ENCODE measurements at regions of chr1 and their contacts with region 1.

Region 1: GRCh38 chr1:52920791-52921291 is 699 bp downstream of the ECHDC2 start:
- DNase-seq: peak; percentile 42
- H3K4me3 ChIP-seq: peak overlapping the region; percentile 64 to 85
- H3K27ac ChIP-seq: peak overlapping the region; percentile 89 to 97
- H3K4me1 ChIP-seq: no peaks in the 10 kb centered on the region
- H3K27me3 ChIP-seq: no peaks in the 10 kb centered on the region
- CTCF ChIP-seq: no peak
- POLR2A ChIP-seq: no peak

Region 2: GRCh38 chr1:52404116-52404986 is 516.5 kb before region 1 on chr1 and contains the starts of genes ORC1 and PRPF38A:
- intact Hi-C with region 1: loop called (anchors 5 kb)
- DNase-seq: peak; percentile 99
- H3K4me3 ChIP-seq: peak within 1 kb of the TSS; percentile 57 to 65
- H3K27ac ChIP-seq: peak within 1 kb of the TSS; percentile 83 to 85
- H3K4me1 ChIP-seq: no peaks in the 10 kb centered on the region
- H3K27me3 ChIP-seq: no peaks in the 10 kb centered on the region
- CTCF ChIP-seq: peak in 2 of 4 experiments; percentile 53 to 56
- POLR2A ChIP-seq: peak; percentile 50
- total RNA-seq, gene ORC1: 2.2 to 3.3 TPM
- total RNA-seq, gene PRPF38A: 15.3 to 24.8 TPM

Region 3: DNA sequence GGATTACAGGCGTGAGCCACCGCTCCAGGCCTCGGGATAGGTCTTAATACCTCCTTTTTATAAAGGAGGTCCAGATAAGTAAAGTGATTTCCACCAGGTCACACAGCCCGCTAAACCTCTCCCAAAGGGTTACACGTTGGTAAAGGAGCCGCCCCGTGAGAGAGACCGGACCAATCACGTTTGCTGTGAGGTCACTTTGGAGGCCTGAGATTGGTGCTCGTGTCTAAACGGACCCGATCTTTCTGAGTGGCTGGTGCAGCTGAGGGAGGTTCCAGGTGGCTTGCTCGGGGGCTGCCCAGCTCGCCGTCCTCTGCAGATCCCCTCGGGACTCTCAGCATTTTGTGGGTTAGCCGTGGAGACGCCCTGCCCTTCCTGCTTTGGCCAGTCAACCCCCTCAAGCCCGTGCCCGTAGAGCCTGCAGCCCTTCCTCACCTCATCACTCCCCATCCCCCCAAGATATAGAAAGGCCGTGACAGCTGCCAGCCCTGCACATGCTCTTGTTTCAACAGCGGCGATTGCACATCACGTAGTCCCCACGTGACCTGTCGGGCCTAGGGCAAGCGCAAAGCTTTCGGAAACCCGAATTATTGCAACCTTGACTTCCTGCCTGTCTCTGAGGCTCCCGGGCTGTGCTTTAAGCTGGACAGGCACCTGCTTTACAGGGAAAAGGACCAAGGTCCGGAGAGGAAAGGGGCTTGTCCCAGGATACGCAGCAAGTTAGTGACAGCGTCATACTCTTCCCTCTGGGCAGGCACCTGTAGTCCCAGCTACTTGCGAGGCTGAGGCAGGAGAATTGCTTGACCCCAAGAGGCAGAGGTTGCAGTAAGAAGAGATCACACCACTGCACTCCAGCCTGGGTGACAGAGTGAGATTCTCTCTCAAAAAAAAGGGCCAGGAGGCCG is 217.7 kb before region 1 on chr1:
- intact Hi-C with region 1: loop called (anchors 2 kb)
- DNase-seq: peak; percentile 86
- H3K4me3 ChIP-seq: peak overlapping the region; percentile 46 to 53
- H3K27ac ChIP-seq: peak overlapping the region; percentile 77 to 81
- H3K4me1 ChIP-seq: no peaks in the 10 kb centered on the region
- H3K27me3 ChIP-seq: no peaks in the 10 kb centered on the region
- CTCF ChIP-seq: no peak
- POLR2A ChIP-seq: peak; percentile 35

Region 4: DNA sequence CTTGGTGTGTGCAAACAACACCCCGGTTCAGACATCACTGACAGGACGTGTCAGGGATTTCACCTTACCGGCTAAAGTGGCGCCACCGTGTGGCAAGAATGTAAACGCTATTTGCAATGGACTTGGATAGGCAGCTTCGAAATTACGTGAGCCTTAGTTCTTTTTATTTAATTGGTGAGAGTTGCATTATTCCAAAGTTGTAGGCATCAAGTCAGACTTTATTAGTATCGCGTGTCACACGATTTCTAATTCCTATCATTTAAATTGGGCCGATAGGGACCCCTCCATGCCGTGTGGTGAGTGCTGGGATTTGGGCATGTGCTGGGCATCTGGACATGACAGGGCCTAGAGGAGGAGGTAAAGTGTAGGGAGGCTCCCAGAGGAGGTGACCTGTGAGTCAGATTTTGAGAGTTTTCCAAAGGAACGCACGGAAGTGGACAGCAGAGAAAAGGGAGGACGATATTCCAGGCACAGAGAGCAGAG is 261.3 kb after region 1 on chr1:
- intact Hi-C with region 1: loop called (anchors 5 kb)
- DNase-seq: peak; percentile 68
- H3K4me3 ChIP-seq: no peak overlapping the region
- H3K27ac ChIP-seq: no peak overlapping the region
- H3K4me1 ChIP-seq: peaks cover under 1% of the 10 kb centered on the region
- H3K27me3 ChIP-seq: no peaks in the 10 kb centered on the region
- CTCF ChIP-seq: peak; percentile 79 to 85 (median 80)
- POLR2A ChIP-seq: no peak

Measured in prostate gland (tissue), 2 donors.